Activated CD4-positive, alpha-beta memory T cell treated with anti-CD3 and anti-CD28 coated beads for 36 hours (primary cell): ENCODE measurements at regions of chr12 and their contacts with region 1.

Region 1: DNA sequence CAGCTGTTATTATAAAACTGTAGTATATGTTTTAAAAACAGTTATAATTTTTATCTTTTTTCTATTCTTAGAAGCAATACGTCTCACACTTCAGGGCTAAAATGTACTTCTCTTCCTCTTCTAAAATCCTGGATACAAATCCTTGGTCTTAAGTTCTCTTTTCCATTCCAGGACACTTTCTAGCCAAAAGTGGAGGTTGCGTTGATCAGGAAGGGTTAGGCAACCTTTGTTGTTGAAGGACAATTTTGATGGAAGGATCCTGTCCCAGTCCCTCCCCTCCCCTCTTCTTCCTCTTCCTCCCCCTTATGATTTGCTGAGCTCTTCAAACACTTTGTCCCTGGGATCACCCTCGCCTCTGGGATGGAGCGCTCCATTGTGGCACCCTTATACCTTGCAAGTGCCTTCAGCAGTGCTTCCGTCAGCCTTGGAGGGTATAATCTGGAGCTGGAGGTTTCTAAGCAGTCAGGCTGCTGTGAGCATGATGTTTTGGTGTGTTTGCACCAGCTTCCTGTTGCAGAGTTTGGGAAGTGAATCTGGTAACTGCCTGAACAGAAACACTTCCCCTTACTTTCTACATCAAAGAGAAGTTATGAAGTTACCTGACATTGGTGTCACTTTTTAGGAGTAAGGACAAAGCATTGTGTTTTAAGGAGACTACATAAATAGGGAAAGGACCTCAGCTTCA is 87.4 kb upstream of the SLC38A2 start:
- DNase-seq: peak; percentile 18
- H3K4me3 Mint-ChIP-seq: peak overlapping the region; percentile 44
- H3K27ac Mint-ChIP-seq: peak overlapping the region; percentile 79
- H3K4me1 Mint-ChIP-seq: peaks cover 55% of the 10 kb centered on the region
- H3K27me3 Mint-ChIP-seq: no peaks in the 10 kb centered on the region

Region 2: DNA sequence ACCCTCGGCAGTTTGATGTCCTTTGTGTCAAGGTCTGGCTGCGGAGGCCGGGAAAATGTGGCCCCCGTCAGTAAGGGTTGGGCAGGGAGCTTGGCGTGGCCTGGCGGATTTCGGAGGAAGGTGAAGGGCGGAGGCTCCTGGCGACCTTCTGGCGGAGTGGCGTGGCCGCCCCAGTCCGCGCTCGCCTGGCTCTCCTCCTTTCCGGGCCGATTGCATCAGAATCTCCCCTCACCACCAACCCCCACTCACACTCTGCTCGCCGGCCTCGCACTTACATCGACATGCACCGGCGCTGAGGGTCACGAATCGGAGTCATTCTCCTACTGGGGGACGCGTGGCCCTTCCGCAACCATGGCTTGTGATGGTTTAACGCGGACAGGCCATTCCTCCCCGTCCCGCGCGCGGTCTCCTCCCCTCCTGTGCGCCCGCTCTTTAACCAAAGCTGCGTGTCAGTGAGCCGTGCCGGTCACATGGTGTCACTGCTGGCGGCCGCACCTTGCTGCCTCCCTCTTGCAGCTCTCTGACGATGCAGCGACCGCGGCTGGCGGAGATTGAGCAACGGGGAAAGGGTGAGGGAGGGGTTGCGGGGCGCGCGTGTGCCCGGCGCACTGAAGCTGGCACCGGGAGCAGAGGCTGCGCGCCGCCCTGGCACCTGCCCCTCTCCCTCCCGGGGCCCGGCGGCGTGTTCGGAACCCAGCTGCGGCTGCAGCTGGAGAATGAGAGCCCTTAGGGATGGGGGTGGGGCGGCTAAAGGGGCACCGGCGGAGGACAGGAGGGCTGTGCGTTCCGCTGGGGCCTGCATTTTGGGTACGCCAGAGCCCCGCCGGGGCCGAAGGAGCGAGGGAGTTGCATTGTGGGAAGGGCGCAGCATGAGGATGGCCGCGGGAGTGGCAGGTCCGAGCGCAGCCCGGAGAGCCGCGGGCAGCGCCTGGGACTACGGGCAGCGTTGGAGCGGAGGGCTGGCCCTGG is 191.1 kb before region 1 on chr12 and contains the start of gene SLC38A1:
- CTCF ChIA-PET with region 1: no interaction called
- POLR2A ChIA-PET with region 1: no interaction called
- intact Hi-C with region 1: loop called (anchors 5 kb)
- DNase-seq: peak; percentile 92
- H3K4me3 Mint-ChIP-seq: no peak within 1 kb of the TSS
- H3K27ac Mint-ChIP-seq: no peak within 1 kb of the TSS
- H3K4me1 Mint-ChIP-seq: peaks cover 23% of the 10 kb centered on the region
- H3K27me3 Mint-ChIP-seq: no peaks in the 10 kb centered on the region
- total RNA-seq, gene SLC38A1: 142 TPM

Region 3: GRCh38 chr12:46430340-46430948 is 29.6 kb before region 1 on chr12:
- CTCF ChIA-PET with region 1: no interaction called
- POLR2A ChIA-PET with region 1: no interaction called
- intact Hi-C with region 1: loop called (anchors 1 kb)
- DNase-seq: no peak
- H3K4me3 Mint-ChIP-seq: peak overlapping the region; percentile 6
- H3K27ac Mint-ChIP-seq: peak overlapping the region; percentile 74
- H3K4me1 Mint-ChIP-seq: peaks cover 15% of the 10 kb centered on the region
- H3K27me3 Mint-ChIP-seq: no peaks in the 10 kb centered on the region

Region 4: DNA sequence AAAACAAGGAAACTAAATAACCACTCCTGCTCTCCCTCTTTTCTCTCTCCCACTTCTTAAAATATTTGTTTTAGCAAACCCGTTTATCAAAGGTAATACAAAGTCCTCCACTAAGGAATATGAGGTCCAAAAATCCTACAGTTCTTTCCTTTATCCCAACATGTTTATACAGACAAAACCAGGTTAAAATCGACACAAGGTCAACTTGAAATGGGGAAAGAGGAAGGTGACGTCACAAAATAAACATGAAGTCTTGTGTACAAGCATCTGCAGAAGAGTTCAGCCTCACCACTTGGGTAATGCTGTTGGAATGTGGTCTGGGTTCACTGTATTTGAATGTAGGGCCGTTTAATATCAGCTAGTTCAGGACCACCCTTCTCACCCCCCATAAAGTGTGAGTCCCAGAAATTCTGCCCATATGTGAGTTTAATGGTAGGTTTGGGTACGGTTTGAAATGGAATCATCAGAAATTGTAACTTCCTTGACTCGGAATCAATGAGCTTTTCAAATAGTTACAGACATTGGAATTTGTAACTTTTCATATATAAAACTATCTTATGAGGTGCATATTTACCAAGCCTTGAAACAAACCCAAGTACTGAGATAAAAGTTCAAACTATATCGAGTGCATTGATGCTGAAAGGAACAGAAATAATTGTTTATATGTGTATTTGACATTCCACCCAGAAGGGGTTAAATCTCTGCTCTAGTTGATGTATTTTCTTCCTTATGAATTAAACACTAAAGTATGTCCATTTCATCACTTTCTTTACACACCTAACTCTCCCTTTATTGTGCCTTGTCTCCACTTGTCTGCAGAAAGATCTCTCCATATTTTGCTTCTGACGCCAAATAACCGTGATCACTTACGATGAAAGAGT is 32.7 kb after region 1 on chr12:
- CTCF ChIA-PET with region 1: no interaction called
- POLR2A ChIA-PET with region 1: no interaction called
- intact Hi-C with region 1: no loop called
- DNase-seq: no peak
- H3K4me3 Mint-ChIP-seq: no peak overlapping the region
- H3K27ac Mint-ChIP-seq: no peak overlapping the region
- H3K4me1 Mint-ChIP-seq: no peaks in the 10 kb centered on the region
- H3K27me3 Mint-ChIP-seq: no peaks in the 10 kb centered on the region

Region 5: DNA sequence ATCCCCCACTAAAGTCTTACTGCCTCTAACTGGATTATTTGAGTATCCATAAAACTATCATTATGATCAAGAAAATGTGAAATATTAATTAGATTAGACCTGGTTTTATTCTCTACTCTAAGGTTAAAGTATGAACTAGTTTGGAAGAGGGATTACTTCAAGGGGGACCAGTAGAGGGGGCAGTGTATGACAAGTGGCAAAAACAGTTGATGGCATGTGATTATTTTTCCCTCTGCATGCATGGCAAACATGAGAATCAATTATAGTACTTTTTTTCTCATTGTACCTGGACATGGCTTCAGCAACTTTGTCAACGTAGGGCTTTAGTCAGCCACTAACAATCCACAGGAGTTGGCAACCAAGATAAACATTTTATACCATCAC is 57.6 kb after region 1 on chr12:
- CTCF ChIA-PET with region 1: no interaction called
- POLR2A ChIA-PET with region 1: no interaction called
- intact Hi-C with region 1: loop called (anchors 1 kb)
- DNase-seq: no peak
- H3K4me3 Mint-ChIP-seq: peak overlapping the region; percentile 21
- H3K27ac Mint-ChIP-seq: peak overlapping the region; percentile 87
- H3K4me1 Mint-ChIP-seq: peaks cover 53% of the 10 kb centered on the region
- H3K27me3 Mint-ChIP-seq: no peaks in the 10 kb centered on the region

Region 6: DNA sequence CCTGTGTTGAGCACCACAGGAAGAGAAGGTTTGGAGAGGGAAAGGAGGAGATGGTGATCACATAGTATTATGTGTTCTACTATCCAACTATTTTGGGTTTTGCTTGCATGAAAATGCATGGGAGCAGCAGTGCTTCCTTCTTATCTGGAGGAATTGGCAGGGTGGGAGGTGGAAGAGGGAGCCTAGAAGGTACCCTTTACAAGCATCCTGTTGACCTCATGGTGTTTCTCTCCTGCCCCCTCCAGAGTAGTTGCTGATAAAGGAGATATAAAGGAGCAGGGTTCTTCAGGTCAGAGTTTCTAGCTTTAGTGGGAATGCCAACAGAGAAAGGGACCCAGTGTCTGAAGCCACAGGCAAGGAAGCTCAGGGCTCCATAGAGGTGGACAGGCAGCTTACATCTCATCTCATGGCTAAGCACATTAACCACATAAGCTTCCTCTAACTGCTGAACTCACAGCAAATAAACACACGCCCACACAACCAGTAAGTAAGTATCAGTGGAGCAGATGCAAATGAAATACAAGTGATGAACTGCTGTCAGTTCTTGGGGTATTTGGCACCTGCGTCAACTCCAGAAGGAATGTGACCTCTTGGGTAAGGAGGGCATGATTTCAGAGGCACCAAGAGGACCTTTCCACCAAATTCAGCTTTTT is 86.8 kb after region 1 on chr12:
- CTCF ChIA-PET with region 1: no interaction called
- POLR2A ChIA-PET with region 1: no interaction called
- intact Hi-C with region 1: loop called (anchors 1 kb)
- DNase-seq: peak; percentile 38
- H3K4me3 Mint-ChIP-seq: no peak overlapping the region
- H3K27ac Mint-ChIP-seq: peak overlapping the region; percentile 51
- H3K4me1 Mint-ChIP-seq: peaks cover 55% of the 10 kb centered on the region
- H3K27me3 Mint-ChIP-seq: no peaks in the 10 kb centered on the region

Region 7: GRCh38 chr12:46577063-46577776 is 117.2 kb after region 1 on chr12:
- CTCF ChIA-PET with region 1: no interaction called
- POLR2A ChIA-PET with region 1: no interaction called
- intact Hi-C with region 1: no loop called
- DNase-seq: no peak
- H3K4me3 Mint-ChIP-seq: no peak overlapping the region
- H3K27ac Mint-ChIP-seq: no peak overlapping the region
- H3K4me1 Mint-ChIP-seq: no peaks in the 10 kb centered on the region
- H3K27me3 Mint-ChIP-seq: no peaks in the 10 kb centered on the region

Region 8: GRCh38 chr12:46744283-46744682 is 284.3 kb after region 1 on chr12:
- CTCF ChIA-PET with region 1: no interaction called
- POLR2A ChIA-PET with region 1: no interaction called
- intact Hi-C with region 1: no loop called
- DNase-seq: no peak
- H3K4me3 Mint-ChIP-seq: no peak overlapping the region
- H3K27ac Mint-ChIP-seq: no peak overlapping the region
- H3K4me1 Mint-ChIP-seq: no peaks in the 10 kb centered on the region
- H3K27me3 Mint-ChIP-seq: peaks cover 9% of the 10 kb centered on the region

Region 9: DNA sequence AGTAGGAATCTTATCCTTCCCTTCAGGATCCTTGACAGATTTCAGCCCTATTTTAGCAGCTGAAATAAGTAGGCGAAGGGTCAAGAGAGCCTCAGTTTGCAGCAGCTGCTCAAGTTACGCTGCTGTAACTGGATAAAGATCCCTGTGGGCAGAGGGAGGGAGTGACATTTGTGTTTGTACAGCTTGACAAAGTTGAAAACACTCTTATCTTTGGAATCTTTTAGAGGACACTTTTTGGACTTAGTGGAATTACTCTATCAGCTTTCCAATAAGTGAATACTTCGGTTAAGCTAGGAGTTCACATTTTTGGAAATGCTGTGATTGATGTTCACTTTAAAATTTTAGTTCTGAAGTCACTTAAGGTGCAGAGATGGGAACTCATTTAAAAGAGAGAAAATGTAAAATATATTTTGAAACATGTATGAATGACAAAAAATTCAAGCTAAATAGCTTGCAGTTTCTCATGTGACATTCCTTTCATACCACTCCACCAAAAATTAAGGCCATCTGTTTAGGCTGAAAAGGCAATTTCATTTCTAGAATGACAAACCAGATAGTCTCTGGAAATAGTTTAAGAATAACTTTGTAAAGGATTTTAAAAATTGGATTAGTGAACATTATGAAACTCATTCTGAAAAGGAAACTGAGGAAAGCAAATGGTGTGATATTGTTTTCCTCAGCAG is 310.6 kb after region 1 on chr12:
- CTCF ChIA-PET with region 1: no interaction called
- POLR2A ChIA-PET with region 1: no interaction called
- intact Hi-C with region 1: no loop called
- DNase-seq: no peak
- H3K4me3 Mint-ChIP-seq: no peak overlapping the region
- H3K27ac Mint-ChIP-seq: no peak overlapping the region
- H3K4me1 Mint-ChIP-seq: no peaks in the 10 kb centered on the region
- H3K27me3 Mint-ChIP-seq: peaks cover 9% of the 10 kb centered on the region

Region 10: DNA sequence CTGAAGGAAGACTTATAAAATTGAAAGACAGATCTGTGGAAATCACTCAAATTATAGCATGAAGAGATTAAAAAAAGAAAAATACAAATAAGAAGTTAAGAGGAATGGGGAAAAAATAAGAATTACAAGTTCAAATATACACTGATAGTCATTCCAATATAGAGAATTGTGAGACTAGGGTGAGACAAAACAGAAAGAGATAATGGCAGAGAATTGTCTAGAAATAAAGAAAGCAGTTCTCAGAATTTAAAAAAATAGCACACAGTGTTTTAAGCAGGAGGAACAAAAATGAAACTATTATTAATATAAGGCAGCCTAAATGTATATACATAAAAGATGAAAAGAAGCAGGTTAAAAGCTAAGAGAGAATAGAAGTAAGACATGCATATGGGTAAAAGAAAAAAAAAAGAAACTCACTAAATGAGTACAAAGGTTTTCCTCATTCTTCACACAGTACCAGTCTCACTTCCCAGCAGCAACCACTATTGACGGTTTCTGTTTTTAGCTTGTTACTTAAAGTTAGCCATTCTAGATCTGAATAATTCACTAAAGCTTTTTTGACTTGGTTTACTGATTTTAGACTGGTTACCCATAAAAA is 334.7 kb after region 1 on chr12:
- CTCF ChIA-PET with region 1: no interaction called
- POLR2A ChIA-PET with region 1: no interaction called
- intact Hi-C with region 1: loop called (anchors 2 kb)
- DNase-seq: peak; percentile 16
- H3K4me3 Mint-ChIP-seq: no peak overlapping the region
- H3K27ac Mint-ChIP-seq: peak overlapping the region; percentile 46
- H3K4me1 Mint-ChIP-seq: peaks cover 17% of the 10 kb centered on the region
- H3K27me3 Mint-ChIP-seq: peaks cover 16% of the 10 kb centered on the region